Thyroid gland (tissue), 4 donors: ENCODE measurements at regions of chr12 and their contacts with region 1.

Region 1: DNA sequence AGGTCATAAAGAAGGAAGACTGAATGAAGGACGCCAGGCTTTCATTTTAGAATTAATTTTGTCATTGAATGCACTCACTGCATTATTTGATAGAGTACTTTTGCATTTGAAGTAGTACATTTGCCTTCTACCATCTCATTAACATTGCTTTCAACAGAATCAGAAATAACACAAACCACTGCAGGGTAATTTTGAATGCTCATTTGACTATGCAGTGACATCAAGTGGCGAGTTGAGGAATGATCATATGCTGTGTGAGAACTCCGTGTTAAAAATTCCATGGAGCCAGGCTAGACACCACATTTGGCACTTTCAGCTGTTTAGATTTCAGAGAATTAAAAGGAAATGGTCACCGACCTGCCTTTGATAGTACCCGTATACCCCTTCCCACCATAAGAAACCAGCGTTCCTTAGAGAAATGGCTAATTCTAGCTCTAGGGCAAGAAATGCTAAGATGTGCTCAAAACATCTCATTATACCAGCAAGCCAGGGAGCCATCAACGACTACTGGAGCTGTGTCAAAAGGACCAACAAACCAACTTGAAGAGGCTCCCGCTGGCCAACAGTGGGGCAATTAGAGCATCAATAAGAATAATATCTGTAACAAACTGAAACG is 16.5 kb downstream of the HEBP1 start:
- DNase-seq: peak in 1 of 2 donors; percentile 30
- H3K4me3 ChIP-seq: no peak overlapping the region
- H3K27ac ChIP-seq: no peak overlapping the region
- H3K4me1 ChIP-seq: peaks cover 14 to 29% of the 10 kb centered on the region in 2 donors
- H3K27me3 ChIP-seq: no peaks in the 10 kb centered on the region
- CTCF ChIP-seq: peak in 5 of 6 experiments; percentile 16 to 73 (median 61)
- POLR2A ChIP-seq: no peak

Region 2: DNA sequence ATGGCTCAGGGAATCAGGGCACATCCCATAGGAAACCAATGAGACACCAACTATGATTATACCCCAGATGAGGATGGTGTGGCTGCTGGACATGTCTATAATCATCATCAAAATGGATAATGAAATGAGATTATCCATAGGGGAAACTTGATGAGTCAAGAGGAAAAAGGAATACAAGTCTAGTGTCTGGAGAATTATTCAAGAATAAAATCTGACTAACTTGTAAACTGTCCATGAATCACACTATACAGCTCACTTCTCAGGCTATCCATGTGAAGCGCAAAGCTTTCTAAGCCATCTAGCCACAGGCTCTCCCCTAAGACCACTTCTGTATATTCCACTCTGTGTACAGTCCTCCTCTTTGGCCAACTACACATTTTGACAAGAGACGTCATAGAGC is 473.4 kb before region 1 on chr12:
- intact Hi-C with region 1: no loop called
- DNase-seq: no peak
- H3K4me3 ChIP-seq: no peak overlapping the region
- H3K27ac ChIP-seq: peak overlapping the region in 1 of 3 donors; percentile 14
- H3K4me1 ChIP-seq: peaks cover 17 to 42% of the 10 kb centered on the region in 2 donors
- H3K27me3 ChIP-seq: no peaks in the 10 kb centered on the region
- CTCF ChIP-seq: no peak
- POLR2A ChIP-seq: no peak

Region 3: DNA sequence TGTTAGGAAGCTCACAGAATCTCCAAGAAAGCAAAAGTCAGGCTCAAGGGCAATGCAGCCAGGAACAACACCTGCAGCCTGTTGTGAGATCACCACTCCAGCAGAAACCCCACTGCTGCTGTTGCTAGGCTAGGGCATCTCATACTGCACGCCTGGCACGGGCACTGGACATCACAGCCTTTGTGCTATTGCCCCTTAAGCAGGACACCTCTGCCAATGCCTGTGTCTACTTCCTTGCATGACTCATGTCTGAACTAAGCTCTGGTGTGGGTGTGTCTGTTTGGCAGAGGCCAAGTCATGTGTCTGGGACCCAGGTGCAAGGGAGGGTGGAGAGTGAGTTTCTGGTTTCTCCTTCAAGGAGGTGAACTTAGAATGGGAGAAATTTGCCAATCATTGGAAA is 180.3 kb before region 1 on chr12:
- intact Hi-C with region 1: loop called (anchors 10 kb)
- DNase-seq: peak; percentile 85 to 87
- H3K4me3 ChIP-seq: no peak overlapping the region
- H3K27ac ChIP-seq: peak overlapping the region; percentile 38 to 44 (median 41)
- H3K4me1 ChIP-seq: peaks cover 10 to 31% of the 10 kb centered on the region in 2 donors
- H3K27me3 ChIP-seq: no peaks in the 10 kb centered on the region
- CTCF ChIP-seq: no peak
- POLR2A ChIP-seq: peak in 1 of 2 donors; percentile 36